ENCODE measurements at regions of chr3 and their contacts with region 1.

Region 1: DNA sequence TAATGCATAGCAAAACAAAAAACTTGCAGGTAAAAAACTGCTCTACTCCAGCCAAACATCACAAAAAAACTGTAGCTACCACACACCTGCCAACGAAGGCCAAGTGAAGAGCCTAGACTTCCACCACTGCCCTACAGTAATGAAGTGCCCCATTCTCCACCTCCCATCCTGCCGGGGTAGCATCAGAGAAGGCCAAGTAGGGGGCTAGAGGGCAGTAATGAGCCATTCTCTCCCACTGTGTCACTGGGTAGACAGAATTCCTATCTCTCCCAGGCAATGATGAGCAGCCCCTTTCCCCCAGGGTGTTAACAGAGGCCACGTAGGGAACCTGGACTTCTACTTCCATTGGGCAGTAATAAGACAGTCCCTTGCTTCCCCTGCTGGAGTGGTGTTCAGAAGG is 9.5 kb downstream of the SEC22C start:
- DNase-seq: peak; percentile 58
- H3K4me3 ChIP-seq: no peak overlapping the region
- H3K27ac ChIP-seq: no peak overlapping the region
- H3K4me1 ChIP-seq: peaks cover 0 to 6% of the 10 kb centered on the region in 2 experiments; a peak in 1 of 4 replicates
- H3K27me3 ChIP-seq: no peaks in the 10 kb centered on the region
- CTCF ChIP-seq: peak; percentile 45
- EP300 ChIP-seq: no peak
- RAD21 ChIP-seq: peak; percentile 66

Region 2: DNA sequence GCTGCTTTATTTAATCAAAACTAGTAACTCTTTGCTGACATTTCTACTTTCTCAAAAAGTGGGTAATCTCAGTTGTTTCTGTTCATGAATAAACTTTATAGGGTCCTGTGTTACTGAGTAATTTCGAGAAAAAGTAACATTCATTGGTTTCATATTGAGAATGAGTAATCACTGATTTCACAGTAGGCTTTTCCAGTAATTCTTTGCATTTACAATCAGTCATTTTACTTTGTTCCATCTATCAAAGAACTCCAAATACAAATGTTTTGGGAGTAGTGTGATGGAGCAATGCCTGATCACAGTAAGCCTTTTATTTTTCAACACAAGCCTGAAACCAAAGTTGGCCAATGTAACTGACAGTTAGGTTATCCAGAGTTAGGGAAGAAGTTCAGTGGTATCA is 963.9 kb before region 1 on chr3:
- CTCF ChIA-PET with region 1: no interaction called
- POLR2A ChIA-PET with region 1: no interaction called
- DNase-seq: no peak
- H3K4me3 ChIP-seq: no peak overlapping the region
- H3K27ac ChIP-seq: no peak overlapping the region
- H3K4me1 ChIP-seq: peaks cover 0 to 2% of the 10 kb centered on the region in 2 experiments; a peak in 2 of 4 replicates
- H3K27me3 ChIP-seq: no peaks in the 10 kb centered on the region
- CTCF ChIP-seq: no peak
- EP300 ChIP-seq: no peak
- RAD21 ChIP-seq: no peak

Region 3: DNA sequence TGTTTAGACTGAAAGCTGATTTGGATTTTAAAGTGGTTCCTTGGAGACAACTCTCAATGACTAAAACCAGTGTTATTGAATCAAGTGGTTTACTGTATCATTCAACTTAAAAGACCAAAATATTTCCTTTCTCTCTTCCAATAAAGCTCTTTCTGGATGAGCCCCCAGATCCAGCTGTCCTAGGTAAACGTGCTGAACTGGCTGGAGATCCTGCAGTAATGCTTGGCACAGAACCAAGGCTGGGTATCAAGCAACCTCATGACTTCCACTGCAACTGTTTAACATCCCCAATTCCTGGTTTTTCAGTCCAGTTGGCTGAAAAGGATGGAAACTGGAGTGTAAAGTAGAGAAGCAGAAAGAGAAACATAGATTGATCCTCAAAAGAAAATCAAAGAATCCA is 19.4 kb before region 1 on chr3:
- CTCF ChIA-PET with region 1: interaction called, 10 read pairs
- POLR2A ChIA-PET with region 1: no interaction called
- DNase-seq: no peak
- H3K4me3 ChIP-seq: no peak overlapping the region
- H3K27ac ChIP-seq: no peak overlapping the region
- H3K4me1 ChIP-seq: no peaks in the 10 kb centered on the region; a peak in 1 of 4 replicates
- H3K27me3 ChIP-seq: no peaks in the 10 kb centered on the region
- CTCF ChIP-seq: no peak
- EP300 ChIP-seq: no peak
- RAD21 ChIP-seq: no peak

Measured in SK-N-SH (cell line).